ENCODE measurements at regions of chr11 and their contacts with region 1.

Region 1: GRCh38 chr11:10540923-10541560 is at the start of gene RNF141:
- DNase-seq: peak; percentile 93
- H3K4me3 Mint-ChIP-seq: peak within 1 kb of the TSS; percentile 81
- H3K27ac Mint-ChIP-seq: peak within 1 kb of the TSS; percentile 94
- H3K4me1 Mint-ChIP-seq: peaks cover 13% of the 10 kb centered on the region
- H3K27me3 Mint-ChIP-seq: no peaks in the 10 kb centered on the region
- CTCF ChIP-seq: peak; percentile 59
- total RNA-seq, gene RNF141: 28.4 and 41.8 TPM in 2 replicates

Region 2: GRCh38 chr11:10455637-10456487 is 85.2 kb before region 1 on chr11:
- CTCF ChIA-PET with region 1: interaction called, 14 read pairs
- POLR2A ChIA-PET with region 1: interaction called, 30 read pairs
- intact Hi-C with region 1: no loop called
- DNase-seq: peak; percentile 35
- H3K4me3 Mint-ChIP-seq: peak overlapping the region; percentile 60
- H3K27ac Mint-ChIP-seq: peak overlapping the region; percentile 92
- H3K4me1 Mint-ChIP-seq: no peaks in the 10 kb centered on the region
- H3K27me3 Mint-ChIP-seq: no peaks in the 10 kb centered on the region
- CTCF ChIP-seq: no peak

Region 3: GRCh38 chr11:10514210-10514609 is 26.8 kb before region 1 on chr11:
- CTCF ChIA-PET with region 1: interaction called, 23 read pairs
- POLR2A ChIA-PET with region 1: interaction called, 28 read pairs
- intact Hi-C with region 1: no loop called
- DNase-seq: peak; percentile 14
- H3K4me3 Mint-ChIP-seq: no peak overlapping the region
- H3K27ac Mint-ChIP-seq: no peak overlapping the region
- H3K4me1 Mint-ChIP-seq: no peaks in the 10 kb centered on the region
- H3K27me3 Mint-ChIP-seq: no peaks in the 10 kb centered on the region
- CTCF ChIP-seq: peak; percentile 35

Region 4: GRCh38 chr11:10584071-10584501 is 43.0 kb after region 1 on chr11:
- CTCF ChIA-PET with region 1: interaction called, 12 read pairs
- POLR2A ChIA-PET with region 1: interaction called, 19 read pairs
- intact Hi-C with region 1: no loop called
- DNase-seq: no peak
- H3K4me3 Mint-ChIP-seq: no peak overlapping the region
- H3K27ac Mint-ChIP-seq: no peak overlapping the region
- H3K4me1 Mint-ChIP-seq: peaks cover 18% of the 10 kb centered on the region
- H3K27me3 Mint-ChIP-seq: no peaks in the 10 kb centered on the region
- CTCF ChIP-seq: no peak

Region 5: DNA sequence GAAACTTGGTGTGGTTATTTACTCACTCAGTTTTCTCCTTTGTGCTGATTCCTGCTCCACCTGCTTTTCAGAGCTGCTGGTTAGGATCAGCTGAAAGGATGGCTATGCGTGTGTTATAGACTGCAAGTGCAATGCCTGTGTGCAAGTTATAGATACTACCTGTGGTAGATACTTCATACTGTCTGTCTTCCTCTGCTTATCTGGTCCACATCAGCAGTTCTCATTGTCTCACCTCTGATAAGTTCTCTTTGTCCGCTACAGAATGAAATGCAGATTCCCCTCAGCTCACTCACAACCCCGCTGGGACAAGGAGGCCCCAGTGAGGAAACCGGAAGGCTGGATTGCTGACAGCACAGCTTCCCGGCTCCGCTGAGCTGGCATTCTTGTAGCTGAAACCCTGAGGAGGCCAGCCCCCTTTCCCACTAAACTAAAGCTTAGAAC is 64.9 kb after region 1 on chr11:
- CTCF ChIA-PET with region 1: interaction called, 11 read pairs
- POLR2A ChIA-PET with region 1: interaction called, 11 read pairs
- intact Hi-C with region 1: no loop called
- DNase-seq: peak; percentile 41
- H3K4me3 Mint-ChIP-seq: no peak overlapping the region
- H3K27ac Mint-ChIP-seq: no peak overlapping the region
- H3K4me1 Mint-ChIP-seq: peaks cover 20% of the 10 kb centered on the region
- H3K27me3 Mint-ChIP-seq: peaks cover under 1% of the 10 kb centered on the region
- CTCF ChIP-seq: no peak

Region 6: DNA sequence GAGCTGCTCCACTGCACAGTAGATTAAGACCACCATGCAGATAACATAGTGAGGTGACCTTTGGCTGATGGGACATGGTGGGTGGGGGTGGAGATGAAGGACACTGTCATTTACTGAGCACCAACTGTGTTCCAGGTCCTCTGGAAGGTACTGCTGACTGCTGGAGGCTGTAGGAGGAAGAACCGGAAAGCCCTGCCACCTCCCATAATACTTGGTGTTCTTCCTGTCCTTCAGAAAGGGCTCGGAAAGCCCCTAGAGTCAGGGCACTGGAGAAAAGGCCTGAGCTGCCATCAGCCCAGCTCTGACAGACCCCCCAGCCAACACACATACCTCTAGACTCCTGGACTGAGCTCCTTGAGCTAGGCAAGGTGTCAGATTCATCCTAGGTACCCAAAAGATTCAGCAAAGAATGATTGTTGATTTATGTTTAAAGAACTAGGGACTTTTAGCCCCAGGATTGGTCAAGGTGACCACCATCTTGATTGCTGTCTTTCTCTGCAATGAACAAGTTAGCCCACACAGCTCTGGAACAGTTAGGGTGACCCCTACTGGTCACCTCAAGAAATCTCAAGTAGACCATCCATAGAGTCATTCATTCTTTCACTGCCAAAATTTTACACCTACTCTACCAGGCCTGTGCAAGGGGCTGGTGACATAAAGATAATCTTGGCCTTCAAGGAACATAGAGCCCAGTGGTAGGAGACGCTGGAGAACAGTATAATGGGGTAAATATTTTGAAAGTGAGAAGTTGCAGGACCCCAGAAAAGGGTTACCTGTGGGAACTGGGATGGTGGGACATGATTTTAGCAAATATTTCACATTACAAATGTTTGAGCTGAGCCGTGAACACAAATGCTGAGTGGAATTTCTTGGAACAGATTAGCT is 113.1 kb after region 1 on chr11:
- CTCF ChIA-PET with region 1: interaction called, 34 read pairs
- POLR2A ChIA-PET with region 1: interaction called, 10 read pairs
- intact Hi-C with region 1: loop called (anchors 1 kb)
- DNase-seq: peak; percentile 80
- H3K4me3 Mint-ChIP-seq: no peak overlapping the region
- H3K27ac Mint-ChIP-seq: no peak overlapping the region
- H3K4me1 Mint-ChIP-seq: peaks cover 4% of the 10 kb centered on the region
- H3K27me3 Mint-ChIP-seq: no peaks in the 10 kb centered on the region
- CTCF ChIP-seq: peak; percentile 87